ENCODE measurements at regions of chr17 and their contacts with region 1.

Region 1: GRCh38 chr17:37047631-37048104 is 98.9 kb downstream of the AATF start:
- DNase-seq: peak; percentile 63 to 85 (median 76)
- ATAC-seq: peak; percentile 89
- H3K4me3 ChIP-seq: no peak overlapping the region
- H3K4me3 Mint-ChIP-seq: no peak overlapping the region
- H3K27ac ChIP-seq: no peak overlapping the region
- H3K27ac Mint-ChIP-seq: peak overlapping the region; percentile 16
- H3K4me1 ChIP-seq: peaks cover 5% of the 10 kb centered on the region
- H3K4me1 Mint-ChIP-seq: peaks cover 13% of the 10 kb centered on the region
- H3K27me3 ChIP-seq: no peaks in the 10 kb centered on the region
- H3K27me3 Mint-ChIP-seq: no peaks in the 10 kb centered on the region
- CTCF ChIP-seq: peak; percentile 88

Region 2: DNA sequence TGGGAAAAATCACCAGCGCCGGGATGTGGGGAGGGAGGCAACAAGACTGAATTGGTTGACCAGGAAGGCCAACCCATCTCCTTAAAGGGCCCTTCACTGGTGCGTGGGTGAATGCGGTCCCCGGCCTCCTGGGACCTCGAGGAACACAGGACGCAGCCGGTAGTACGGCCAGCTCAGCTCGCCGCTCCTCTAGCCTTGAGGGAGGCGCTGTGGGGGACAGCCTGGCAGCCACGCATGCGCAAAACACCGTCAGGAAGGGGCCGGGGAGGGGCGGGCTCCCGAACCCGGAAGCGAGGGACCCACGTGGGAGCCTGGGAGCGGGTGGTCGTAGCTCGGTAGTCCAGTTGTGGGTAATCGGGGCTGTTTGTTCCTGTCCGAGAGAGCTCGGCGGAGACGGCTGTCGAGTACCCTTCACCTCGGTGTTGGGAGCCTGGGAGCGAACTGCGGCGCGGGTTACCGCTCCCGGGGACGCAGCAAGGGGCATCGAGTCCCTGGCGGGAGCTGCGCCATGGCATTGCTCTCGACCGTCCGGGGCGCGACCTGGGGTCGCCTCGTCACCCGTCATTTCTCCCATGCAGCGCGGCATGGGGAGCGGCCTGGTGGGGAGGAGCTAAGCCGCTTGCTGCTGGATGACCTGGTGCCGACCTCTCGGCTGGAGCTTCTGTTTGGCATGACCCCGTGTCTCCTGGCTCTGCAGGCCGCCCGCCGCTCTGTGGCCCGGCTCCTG is 446.2 kb before region 1 on chr17 and contains the start of gene MRM1:
- CTCF ChIA-PET with region 1: interaction called, 20 read pairs
- POLR2A ChIA-PET with region 1: interaction called, 4 read pairs
- intact Hi-C with region 1: loop called (anchors 1 to 2 kb)
- DNase-seq: peak; percentile 80 to 94 (median 87)
- ATAC-seq: peak; percentile 74
- H3K4me3 ChIP-seq: peak within 1 kb of the TSS; percentile 89
- H3K4me3 Mint-ChIP-seq: peak within 1 kb of the TSS; percentile 97
- H3K27ac ChIP-seq: peak within 1 kb of the TSS; percentile 57 to 65
- H3K27ac Mint-ChIP-seq: peak within 1 kb of the TSS; percentile 94
- H3K4me1 ChIP-seq: peaks cover 31% of the 10 kb centered on the region
- H3K4me1 Mint-ChIP-seq: peaks cover 47% of the 10 kb centered on the region
- H3K27me3 ChIP-seq: no peaks in the 10 kb centered on the region
- H3K27me3 Mint-ChIP-seq: no peaks in the 10 kb centered on the region
- CTCF ChIP-seq: no peak
- total RNA-seq, gene MRM1: 0.81 to 1.1 TPM

Region 3: GRCh38 chr17:36705874-36706731 is 341.6 kb before region 1 on chr17:
- CTCF ChIA-PET with region 1: no interaction called
- POLR2A ChIA-PET with region 1: no interaction called
- intact Hi-C with region 1: loop called in 1 of 2 experiments (anchors 2 kb)
- DNase-seq: peak in 12 of 14 experiments; percentile 25 to 68 (median 38)
- ATAC-seq: peak; percentile 74
- H3K4me3 ChIP-seq: no peak overlapping the region
- H3K4me3 Mint-ChIP-seq: no peak overlapping the region
- H3K27ac ChIP-seq: no peak overlapping the region
- H3K27ac Mint-ChIP-seq: no peak overlapping the region
- H3K4me1 ChIP-seq: peaks cover 6% of the 10 kb centered on the region
- H3K4me1 Mint-ChIP-seq: no peaks in the 10 kb centered on the region
- H3K27me3 ChIP-seq: peaks cover 31 to 36% of the 10 kb centered on the region in 2 experiments
- H3K27me3 Mint-ChIP-seq: peaks cover 45% of the 10 kb centered on the region
- CTCF ChIP-seq: peak; percentile 75

Region 4: GRCh38 chr17:37239690-37240334 is 192.1 kb after region 1 on chr17:
- CTCF ChIA-PET with region 1: interaction called, 3 read pairs
- POLR2A ChIA-PET with region 1: no interaction called
- intact Hi-C with region 1: loop called in 1 of 2 experiments (anchors 10 kb)
- DNase-seq: peak in 3 of 14 experiments; percentile 21 to 44 (median 31)
- ATAC-seq: no peak
- H3K4me3 ChIP-seq: no peak overlapping the region
- H3K4me3 Mint-ChIP-seq: no peak overlapping the region
- H3K27ac ChIP-seq: no peak overlapping the region
- H3K27ac Mint-ChIP-seq: no peak overlapping the region
- H3K4me1 ChIP-seq: no peaks in the 10 kb centered on the region
- H3K4me1 Mint-ChIP-seq: no peaks in the 10 kb centered on the region
- H3K27me3 ChIP-seq: no peaks in the 10 kb centered on the region
- H3K27me3 Mint-ChIP-seq: no peaks in the 10 kb centered on the region
- CTCF ChIP-seq: peak; percentile 63